ENCODE measurements at regions of chr3 and their contacts with region 1.

Region 1: DNA sequence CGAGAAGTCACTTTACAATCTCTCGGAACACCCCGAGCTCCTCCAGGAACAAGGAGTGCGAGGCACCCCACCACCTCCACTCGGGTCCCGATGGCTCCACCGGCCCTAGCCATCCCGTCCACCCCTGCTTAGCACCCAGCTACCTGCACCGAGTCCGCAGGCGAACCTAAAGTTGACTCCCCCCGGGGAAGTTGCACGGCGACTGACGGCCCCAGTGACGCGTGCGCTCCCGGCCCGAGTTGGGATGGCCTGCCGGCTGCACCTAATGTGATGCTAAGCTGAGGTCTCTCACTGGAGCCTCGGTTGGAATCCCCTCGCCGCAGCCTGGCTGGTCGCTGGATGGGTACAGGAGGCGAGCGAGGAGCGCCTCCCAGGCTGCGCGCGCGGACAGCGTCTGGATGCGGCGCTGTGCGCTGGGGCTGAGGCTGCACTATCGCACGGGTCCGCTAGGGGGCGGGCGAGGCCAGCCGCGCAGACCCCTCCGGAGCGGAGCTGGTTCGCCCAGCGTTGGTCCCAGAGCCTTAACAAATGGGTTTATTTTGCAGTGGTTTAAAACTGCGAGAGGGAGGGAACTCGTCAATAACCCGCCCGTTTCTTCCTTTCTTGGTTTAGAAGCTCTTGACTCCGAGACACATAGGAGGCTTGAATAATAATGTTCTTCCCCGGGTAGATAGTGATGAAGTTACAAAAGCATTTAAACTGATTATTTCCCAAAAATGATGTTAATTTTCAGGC is at the start of gene OXTR:
- DNase-seq: peak in 1 of 2 experiments; percentile 80
- H3K4me3 ChIP-seq: peak within 1 kb of the TSS; percentile 53; the same call in 1 of the 2 replicates
- H3K27ac ChIP-seq: no peak within 1 kb of the TSS
- H3K4me1 ChIP-seq: peaks cover 9% of the 10 kb centered on the region; the same call in 1 of the 2 replicates
- H3K27me3 ChIP-seq: no peaks in the 10 kb centered on the region
- CTCF ChIP-seq: peak; percentile 100
- total RNA-seq, gene OXTR: 3.4 and 6.9 TPM in 2 replicates

Region 2: DNA sequence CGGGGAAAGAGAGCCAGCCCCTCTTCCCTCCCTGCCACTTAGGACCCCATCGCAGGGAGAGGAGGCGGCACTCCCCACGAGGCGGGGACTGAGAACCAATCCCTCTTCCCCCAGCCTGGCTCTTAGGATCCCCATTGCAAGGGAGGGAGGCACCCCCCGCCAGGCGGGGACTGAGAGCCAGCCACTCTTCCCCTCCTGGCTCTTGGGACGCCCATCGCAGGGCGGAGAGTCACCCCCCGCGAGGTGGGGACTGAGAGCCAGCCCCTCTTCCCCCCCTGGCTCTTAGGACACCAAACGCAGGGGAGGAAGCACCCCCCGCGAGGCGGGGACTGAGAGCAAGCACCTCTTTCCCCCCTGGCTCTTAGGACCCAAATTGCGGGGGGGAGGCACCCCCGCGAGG is 90.5 kb before region 1 on chr3:
- CTCF ChIA-PET with region 1: no interaction called
- POLR2A ChIA-PET with region 1: no interaction called
- intact Hi-C with region 1: loop called (anchors 1 kb)
- DNase-seq: no peak
- H3K4me3 ChIP-seq: peak overlapping the region; percentile 57; the same call in 1 of the 2 replicates
- H3K27ac ChIP-seq: peak overlapping the region; percentile 95
- H3K4me1 ChIP-seq: peaks cover 53% of the 10 kb centered on the region
- H3K27me3 ChIP-seq: no peaks in the 10 kb centered on the region
- CTCF ChIP-seq: no peak

Region 3: GRCh38 chr3:8702560-8702959 is 66.7 kb before region 1 on chr3:
- CTCF ChIA-PET with region 1: interaction called, 11 read pairs
- POLR2A ChIA-PET with region 1: no interaction called
- intact Hi-C with region 1: no loop called
- DNase-seq: no peak
- H3K4me3 ChIP-seq: no peak overlapping the region
- H3K27ac ChIP-seq: no peak overlapping the region
- H3K4me1 ChIP-seq: no peaks in the 10 kb centered on the region
- H3K27me3 ChIP-seq: no peaks in the 10 kb centered on the region
- CTCF ChIP-seq: peak; percentile 51

Region 4: GRCh38 chr3:8963137-8963869 is 194.0 kb after region 1 on chr3 and contains the start of gene RAD18:
- CTCF ChIA-PET with region 1: no interaction called
- POLR2A ChIA-PET with region 1: no interaction called
- intact Hi-C with region 1: loop called (anchors 2 kb)
- DNase-seq: peak; percentile 70 to 90
- H3K4me3 ChIP-seq: peak within 1 kb of the TSS; percentile 69
- H3K27ac ChIP-seq: peak within 1 kb of the TSS; percentile 77
- H3K4me1 ChIP-seq: peaks cover 37% of the 10 kb centered on the region
- H3K27me3 ChIP-seq: no peaks in the 10 kb centered on the region
- CTCF ChIP-seq: no peak
- total RNA-seq, gene RAD18: 19.1 and 29.1 TPM in 2 replicates

Region 5: DNA sequence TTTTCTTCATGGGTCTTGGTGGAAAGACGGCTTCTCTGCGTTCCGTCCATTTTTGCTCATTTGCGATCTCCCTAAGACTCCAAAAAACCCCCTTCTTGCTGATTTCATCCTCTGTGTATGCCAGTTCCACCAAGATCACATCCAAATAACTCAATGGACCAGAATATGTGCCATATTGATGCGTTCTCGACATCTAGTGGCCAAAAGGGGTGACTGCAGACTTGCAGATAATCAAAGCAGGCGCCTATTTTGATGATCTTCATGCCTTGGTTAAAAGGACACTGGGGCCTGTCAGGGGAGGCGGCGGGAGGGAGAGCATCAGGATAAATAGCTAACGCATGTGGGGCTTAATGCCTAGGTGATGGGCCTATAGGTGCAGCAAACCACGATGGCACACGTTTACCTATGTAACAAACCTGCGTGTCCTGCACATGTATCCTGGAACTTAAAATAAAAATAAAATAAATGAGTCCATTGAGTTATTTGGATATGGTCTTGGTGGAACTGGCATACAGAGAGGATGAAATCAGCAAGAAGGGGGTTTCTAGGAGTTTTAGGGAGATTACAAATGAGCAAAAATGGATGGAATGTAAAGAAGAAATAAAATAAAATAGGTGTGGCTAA is 298.2 kb after region 1 on chr3:
- CTCF ChIA-PET with region 1: no interaction called
- POLR2A ChIA-PET with region 1: no interaction called
- intact Hi-C with region 1: loop called (anchors 5 kb)
- DNase-seq: peak in 1 of 2 experiments; percentile 33
- H3K4me3 ChIP-seq: no peak overlapping the region
- H3K27ac ChIP-seq: no peak overlapping the region
- H3K4me1 ChIP-seq: no peaks in the 10 kb centered on the region
- H3K27me3 ChIP-seq: no peaks in the 10 kb centered on the region
- CTCF ChIP-seq: peak; percentile 96